GM12878 (cell line): ENCODE measurements at regions of chr16 and their contacts with region 1.

Region 1: GRCh38 chr16:48054881-48055601 is 100.8 kb downstream of the ABCC12 start:
- DNase-seq: no peak
- ATAC-seq: peak; percentile 94
- H3K4me3 ChIP-seq: no peak overlapping the region
- H3K27ac ChIP-seq: no peak overlapping the region
- H3K4me1 ChIP-seq: no peaks in the 10 kb centered on the region
- H3K27me3 ChIP-seq: no peaks in the 10 kb centered on the region
- CTCF ChIP-seq: peak; percentile 92 to 95 (median 95)
- EP300 ChIP-seq: no peak
- POLR2A ChIP-seq: no peak
- RAD21 ChIP-seq: peak; percentile 87

Region 2: GRCh38 chr16:46947900-46948547 is 1107.0 kb before region 1 on chr16:
- CTCF ChIA-PET with region 1: interaction called, 4 read pairs
- POLR2A ChIA-PET with region 1: no interaction called
- RAD21 ChIA-PET with region 1: no interaction called
- SMC1A ChIA-PET with region 1: no interaction called
- in situ Hi-C with region 1: no loop called
- intact Hi-C with region 1: loop called (anchors 10 kb)
- DNase-seq: peak; percentile 32
- ATAC-seq: peak; percentile 90
- H3K4me3 ChIP-seq: no peak overlapping the region
- H3K27ac ChIP-seq: no peak overlapping the region
- H3K4me1 ChIP-seq: peaks cover 5% of the 10 kb centered on the region; the same call in 1 of the 2 replicates
- H3K27me3 ChIP-seq: no peaks in the 10 kb centered on the region
- CTCF ChIP-seq: peak; percentile 58 to 77 (median 59); a peak in 5 of 6 replicates
- EP300 ChIP-seq: no peak
- POLR2A ChIP-seq: no peak
- RAD21 ChIP-seq: peak; percentile 95

Region 3: DNA sequence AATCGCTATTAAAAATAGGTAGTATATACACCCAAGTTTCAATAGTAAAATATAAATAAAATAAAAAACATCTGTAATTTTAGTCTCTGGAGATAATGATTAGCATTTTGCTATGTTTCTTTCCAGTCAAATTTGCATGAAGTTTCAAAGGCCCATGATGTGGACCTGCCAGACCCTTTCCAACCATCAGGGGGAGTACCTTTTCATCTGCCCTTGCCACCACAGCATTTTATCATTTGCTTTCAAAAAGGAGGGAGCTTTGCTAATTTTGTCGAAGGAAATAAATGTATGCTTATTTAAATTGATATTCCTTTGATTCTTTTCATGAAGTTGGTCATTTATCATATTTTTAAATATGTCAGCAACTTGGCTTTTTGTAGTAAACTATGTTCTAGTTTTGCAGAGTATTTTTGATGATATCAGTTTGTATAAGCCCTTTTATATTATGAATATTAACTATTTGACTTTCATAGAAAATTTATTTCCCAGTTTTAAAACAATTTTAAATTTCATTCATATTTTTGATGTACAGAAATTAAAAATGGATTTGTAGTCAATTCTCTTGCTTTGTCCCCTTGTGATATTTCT is 796.1 kb before region 1 on chr16:
- CTCF ChIA-PET with region 1: interaction called, 3 read pairs
- POLR2A ChIA-PET with region 1: no interaction called
- RAD21 ChIA-PET with region 1: no interaction called
- SMC1A ChIA-PET with region 1: no interaction called
- in situ Hi-C with region 1: no loop called
- intact Hi-C with region 1: loop called (anchors 5 kb)
- DNase-seq: peak; percentile 5
- ATAC-seq: peak; percentile 88
- H3K4me3 ChIP-seq: no peak overlapping the region
- H3K27ac ChIP-seq: no peak overlapping the region
- H3K4me1 ChIP-seq: no peaks in the 10 kb centered on the region
- H3K27me3 ChIP-seq: no peaks in the 10 kb centered on the region
- CTCF ChIP-seq: peak; percentile 51 to 64 (median 63); a peak in 5 of 6 replicates
- EP300 ChIP-seq: no peak
- POLR2A ChIP-seq: no peak
- RAD21 ChIP-seq: peak; percentile 59

Region 4: DNA sequence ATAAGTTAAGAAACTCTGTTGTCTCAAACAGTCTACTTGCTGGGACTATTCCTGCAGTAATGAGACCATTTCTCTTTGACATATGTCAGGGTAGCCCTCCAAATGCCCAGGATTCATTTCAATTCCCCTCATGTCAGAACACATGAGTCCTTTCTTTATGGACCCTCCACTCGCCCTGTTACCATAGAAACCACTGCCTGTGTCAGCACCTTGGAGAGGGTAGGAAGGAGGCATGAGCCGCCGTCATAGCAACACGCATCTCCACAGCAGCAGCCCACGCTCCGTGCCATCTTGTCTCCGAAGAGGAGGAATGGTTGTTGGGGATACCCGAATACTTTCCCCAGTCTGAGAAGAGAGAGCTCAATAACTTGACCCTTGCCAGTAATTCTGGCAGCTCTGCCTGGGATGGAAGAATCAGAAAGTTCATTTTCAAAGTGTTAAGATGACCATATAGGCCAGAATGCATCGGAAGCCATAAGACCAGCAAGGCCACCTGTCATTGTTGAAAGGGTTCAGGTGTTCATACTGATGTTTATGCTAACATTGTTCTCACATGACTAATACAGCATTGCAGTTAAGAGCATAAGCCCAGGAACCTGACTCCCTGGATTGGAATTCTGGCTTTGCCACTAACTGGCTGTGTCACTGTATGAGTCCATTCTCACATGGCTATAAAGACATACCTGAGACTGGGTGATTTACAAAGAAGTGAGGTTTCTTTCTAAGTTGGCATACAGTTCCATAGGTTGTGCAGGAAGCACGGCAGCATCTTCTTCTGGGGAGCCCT is 40.5 kb before region 1 on chr16:
- CTCF ChIA-PET with region 1: no interaction called
- POLR2A ChIA-PET with region 1: no interaction called
- RAD21 ChIA-PET with region 1: no interaction called
- SMC1A ChIA-PET with region 1: no interaction called
- in situ Hi-C with region 1: no loop called
- intact Hi-C with region 1: no loop called
- DNase-seq: no peak
- ATAC-seq: no peak
- H3K4me3 ChIP-seq: no peak overlapping the region
- H3K27ac ChIP-seq: no peak overlapping the region
- H3K4me1 ChIP-seq: no peaks in the 10 kb centered on the region
- H3K27me3 ChIP-seq: no peaks in the 10 kb centered on the region
- CTCF ChIP-seq: no peak
- EP300 ChIP-seq: no peak
- POLR2A ChIP-seq: no peak
- RAD21 ChIP-seq: no peak

Region 5: DNA sequence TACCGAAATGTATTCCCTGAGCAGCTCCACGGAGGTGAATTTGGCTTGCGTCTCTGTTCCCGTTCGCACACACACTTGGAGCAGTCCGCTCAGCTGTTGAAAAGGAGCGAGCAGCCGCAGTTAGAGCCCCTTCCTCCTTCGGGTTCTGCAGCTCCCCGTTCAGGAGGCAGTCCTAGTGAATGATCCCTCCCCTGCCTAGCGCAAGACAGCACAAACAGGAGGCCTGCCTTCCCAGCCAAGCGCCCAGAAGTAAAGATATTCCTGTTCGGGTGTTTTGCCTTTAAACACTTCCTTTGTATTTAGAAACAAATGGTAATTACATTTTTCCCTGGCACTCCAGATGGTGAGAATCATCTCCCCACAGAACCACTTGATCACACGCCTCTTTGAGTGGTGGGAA is 36.1 kb after region 1 on chr16:
- CTCF ChIA-PET with region 1: interaction called, 30 read pairs
- POLR2A ChIA-PET with region 1: no interaction called
- RAD21 ChIA-PET with region 1: interaction called, 6 read pairs
- SMC1A ChIA-PET with region 1: interaction called, 4 read pairs
- in situ Hi-C with region 1: no loop called
- intact Hi-C with region 1: no loop called
- DNase-seq: no peak
- ATAC-seq: no peak
- H3K4me3 ChIP-seq: no peak overlapping the region
- H3K27ac ChIP-seq: no peak overlapping the region
- H3K4me1 ChIP-seq: peaks cover 3% of the 10 kb centered on the region; the same call in 1 of the 2 replicates
- H3K27me3 ChIP-seq: no peaks in the 10 kb centered on the region
- CTCF ChIP-seq: no peak
- EP300 ChIP-seq: no peak
- POLR2A ChIP-seq: no peak
- RAD21 ChIP-seq: no peak

Region 6: DNA sequence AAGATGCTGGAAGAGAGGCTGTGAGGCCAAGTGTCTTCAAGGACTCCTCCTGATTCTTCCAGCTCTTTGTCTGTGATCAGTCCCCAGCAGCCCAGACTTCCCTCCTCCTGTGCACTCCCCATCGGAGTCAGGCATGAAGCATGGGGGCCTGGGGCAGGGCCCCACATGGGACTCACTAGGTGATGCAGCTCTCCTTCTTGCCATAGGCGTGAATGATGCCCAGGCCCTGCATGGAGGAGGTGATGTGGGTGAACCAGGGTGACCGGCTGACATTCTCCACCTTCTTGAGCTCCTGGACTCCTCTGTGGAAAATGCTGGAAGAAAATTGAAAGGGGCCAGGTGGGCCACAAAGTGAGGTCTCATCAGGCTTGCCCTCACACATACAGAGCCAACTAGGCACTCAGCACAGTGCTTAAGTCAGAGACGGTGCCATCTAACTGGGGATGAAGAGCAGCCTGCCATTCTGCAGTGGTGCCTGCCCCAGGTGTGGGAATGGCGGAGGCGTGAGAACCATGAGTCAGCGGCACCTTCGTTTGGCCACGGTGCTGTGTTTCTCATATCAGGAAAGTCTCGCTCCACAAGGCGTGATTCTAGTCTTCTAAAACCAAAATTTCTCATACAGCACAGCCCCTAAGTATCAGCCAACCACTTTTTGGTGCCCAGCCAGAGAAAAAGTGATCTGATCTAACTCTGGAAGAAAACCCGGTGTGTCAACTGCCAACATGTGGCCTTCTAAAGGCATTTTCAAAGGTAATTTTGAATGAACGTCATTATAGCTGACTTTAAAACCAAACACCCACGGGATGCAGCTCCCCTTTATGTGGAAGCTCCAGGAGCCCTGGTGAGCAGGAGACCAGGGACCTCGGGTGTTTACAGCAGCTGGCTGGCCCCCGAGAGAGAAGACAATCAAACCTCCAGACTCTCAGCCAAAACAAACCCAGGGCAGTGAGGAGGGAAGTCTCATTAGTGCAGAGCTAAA is 45.9 kb after region 1 on chr16:
- CTCF ChIA-PET with region 1: interaction called, 23 read pairs
- POLR2A ChIA-PET with region 1: no interaction called
- RAD21 ChIA-PET with region 1: interaction called, 10 read pairs
- SMC1A ChIA-PET with region 1: interaction called, 17 read pairs
- in situ Hi-C with region 1: no loop called
- intact Hi-C with region 1: no loop called
- DNase-seq: peak; percentile 74
- ATAC-seq: peak; percentile 80
- H3K4me3 ChIP-seq: no peak overlapping the region
- H3K27ac ChIP-seq: peak overlapping the region; percentile 33
- H3K4me1 ChIP-seq: peaks cover 25% of the 10 kb centered on the region
- H3K27me3 ChIP-seq: no peaks in the 10 kb centered on the region
- CTCF ChIP-seq: no peak
- EP300 ChIP-seq: peak in 1 of 2 experiments; percentile 83; a peak in 2 of 4 replicates
- POLR2A ChIP-seq: no peak
- RAD21 ChIP-seq: no peak

Region 7: DNA sequence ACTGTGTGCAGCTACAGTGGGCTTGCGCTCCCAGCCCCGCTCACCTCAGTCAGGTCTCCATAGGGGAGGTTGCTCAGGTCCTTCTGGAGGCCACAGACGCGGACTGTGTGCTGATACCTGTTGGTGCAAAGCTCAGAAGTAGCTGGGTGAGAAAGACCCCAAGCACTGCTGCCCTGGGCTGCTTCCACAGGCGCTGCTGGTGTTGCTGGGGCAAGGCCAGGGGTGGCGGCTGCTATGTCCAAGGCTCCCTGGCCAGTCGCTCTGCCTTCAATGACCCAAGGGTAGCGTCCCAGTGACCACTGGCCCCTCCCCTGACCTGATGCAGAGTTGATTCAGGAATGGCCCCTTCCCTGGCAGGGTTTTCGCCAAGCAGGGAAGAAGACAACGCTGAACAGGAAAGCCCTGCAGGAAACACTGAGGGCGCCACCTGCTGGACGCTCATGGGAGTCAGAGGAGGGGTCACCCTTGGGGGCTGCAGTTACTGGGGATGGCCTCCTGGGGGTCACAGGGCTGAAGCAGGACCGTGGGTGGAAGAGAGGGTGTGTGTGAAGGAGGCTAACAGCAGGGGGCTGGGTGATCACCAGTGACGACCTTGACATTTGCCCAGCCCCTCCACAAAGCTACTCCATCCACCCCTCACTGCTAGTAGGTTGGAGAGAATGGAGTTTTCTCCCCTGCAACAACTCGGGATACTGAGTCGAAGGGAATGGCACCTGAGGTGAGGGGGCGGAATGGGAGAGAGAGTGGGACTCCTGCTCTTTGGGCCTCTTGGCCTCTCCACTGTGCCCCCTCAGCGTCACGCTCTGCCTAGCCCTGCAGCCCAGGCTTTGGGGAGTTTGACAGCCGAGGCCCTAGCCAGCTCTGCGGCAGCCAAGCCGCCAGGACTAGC is 62.4 kb after region 1 on chr16:
- CTCF ChIA-PET with region 1: interaction called, 29 read pairs
- POLR2A ChIA-PET with region 1: no interaction called
- RAD21 ChIA-PET with region 1: interaction called, 26 read pairs
- SMC1A ChIA-PET with region 1: interaction called, 11 read pairs
- in situ Hi-C with region 1: no loop called
- intact Hi-C with region 1: loop called (anchors 5 kb)
- DNase-seq: no peak
- ATAC-seq: peak; percentile 98
- H3K4me3 ChIP-seq: no peak overlapping the region
- H3K27ac ChIP-seq: no peak overlapping the region
- H3K4me1 ChIP-seq: no peaks in the 10 kb centered on the region
- H3K27me3 ChIP-seq: no peaks in the 10 kb centered on the region
- CTCF ChIP-seq: peak; percentile 77 to 96 (median 95)
- EP300 ChIP-seq: no peak
- POLR2A ChIP-seq: no peak
- RAD21 ChIP-seq: peak; percentile 86

Region 8: GRCh38 chr16:48156790-48157209 is 101.8 kb after region 1 on chr16:
- CTCF ChIA-PET with region 1: interaction called, 5 read pairs
- POLR2A ChIA-PET with region 1: no interaction called
- RAD21 ChIA-PET with region 1: interaction called, 4 read pairs
- SMC1A ChIA-PET with region 1: interaction called, 5 read pairs
- in situ Hi-C with region 1: no loop called
- intact Hi-C with region 1: loop called (anchors 5 kb)
- DNase-seq: no peak
- ATAC-seq: peak; percentile 81
- H3K4me3 ChIP-seq: no peak overlapping the region
- H3K27ac ChIP-seq: no peak overlapping the region
- H3K4me1 ChIP-seq: peaks cover 4% of the 10 kb centered on the region; the same call in 1 of the 2 replicates
- H3K27me3 ChIP-seq: no peaks in the 10 kb centered on the region; a peak in 1 of 4 replicates
- CTCF ChIP-seq: peak; percentile 90 to 96 (median 96)
- EP300 ChIP-seq: no peak
- POLR2A ChIP-seq: no peak
- RAD21 ChIP-seq: peak; percentile 83